ENCODE measurements at regions of chr2 and their contacts with region 1.

Region 1: DNA sequence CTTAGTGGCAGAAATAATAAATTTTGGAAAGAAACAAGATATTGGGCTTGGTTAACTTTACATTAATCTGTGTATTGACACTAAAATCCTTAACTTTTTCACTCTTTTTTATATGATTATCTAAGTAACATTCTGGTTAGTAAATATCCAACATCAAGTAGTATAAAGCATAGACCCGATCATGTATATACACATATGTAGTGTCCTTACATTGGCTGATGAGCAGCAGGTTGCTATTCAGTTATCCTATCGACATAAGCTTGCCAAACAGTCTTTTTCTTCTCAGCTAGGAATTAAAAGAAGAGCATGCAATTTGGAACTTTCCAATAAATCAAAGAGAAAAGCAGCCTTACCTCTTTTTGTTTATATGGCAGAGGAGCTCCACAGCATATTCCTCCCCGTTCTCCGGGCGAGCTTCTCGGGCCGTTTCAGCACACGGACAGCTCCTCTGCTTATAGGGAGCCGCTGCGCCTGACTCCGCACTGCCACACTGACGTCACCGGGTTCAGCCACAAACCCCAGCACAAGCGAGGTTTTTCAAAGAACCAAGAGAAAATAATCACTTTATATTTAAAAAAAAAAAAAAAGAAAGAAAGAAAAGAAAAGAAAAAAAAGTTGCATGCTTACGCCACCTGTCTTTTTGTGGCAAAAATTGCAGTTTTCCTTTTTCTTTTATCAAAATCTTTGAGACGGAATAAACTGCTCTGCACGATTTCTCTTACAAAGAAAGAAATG is at the start of gene SCG2:
- DNase-seq: peak; percentile 96
- ATAC-seq: peak; percentile 96
- H3K4me3 ChIP-seq: no peak within 1 kb of the TSS
- H3K27ac ChIP-seq: no peak within 1 kb of the TSS
- H3K4me1 ChIP-seq: peaks cover 8% of the 10 kb centered on the region
- H3K27me3 ChIP-seq: no peaks in the 10 kb centered on the region
- CTCF ChIP-seq: peak; percentile 42
- POLR2A ChIP-seq: no peak
- RAD21 ChIP-seq: peak; percentile 41; the same call in 1 of the 2 replicates
- total RNA-seq, gene SCG2: 0.36 and 0.56 TPM in 2 replicates

Region 2: DNA sequence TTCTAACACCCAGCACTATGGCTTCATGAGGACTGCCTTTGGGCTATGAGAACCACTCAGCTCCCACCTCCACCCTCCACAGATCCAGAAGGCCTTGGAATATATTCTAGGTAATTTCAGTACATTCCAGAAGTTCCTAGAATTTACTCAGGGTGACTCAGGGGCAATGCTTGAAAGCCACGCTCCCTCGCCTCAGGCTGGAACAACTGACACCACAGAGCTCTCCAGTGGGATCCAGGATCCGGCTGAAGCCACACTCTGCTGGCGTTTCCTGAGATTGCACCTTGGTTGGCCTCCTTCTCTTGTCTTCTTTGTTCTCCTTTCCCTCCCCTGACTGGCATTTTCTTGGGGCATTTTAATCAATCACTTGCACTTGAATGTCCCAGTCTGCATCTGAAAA is 642.8 kb before region 1 on chr2:
- CTCF ChIA-PET with region 1: no interaction called
- POLR2A ChIA-PET with region 1: no interaction called
- dilution Hi-C with region 1: no loop called
- in situ Hi-C with region 1: no loop called
- intact Hi-C with region 1: no loop called
- DNase-seq: peak; percentile 87
- ATAC-seq: peak; percentile 98
- H3K4me3 ChIP-seq: no peak overlapping the region
- H3K27ac ChIP-seq: peak overlapping the region; percentile 71
- H3K4me1 ChIP-seq: peaks cover 7% of the 10 kb centered on the region
- H3K27me3 ChIP-seq: no peaks in the 10 kb centered on the region
- CTCF ChIP-seq: peak; percentile 55
- POLR2A ChIP-seq: no peak
- RAD21 ChIP-seq: peak; percentile 67

Region 3: DNA sequence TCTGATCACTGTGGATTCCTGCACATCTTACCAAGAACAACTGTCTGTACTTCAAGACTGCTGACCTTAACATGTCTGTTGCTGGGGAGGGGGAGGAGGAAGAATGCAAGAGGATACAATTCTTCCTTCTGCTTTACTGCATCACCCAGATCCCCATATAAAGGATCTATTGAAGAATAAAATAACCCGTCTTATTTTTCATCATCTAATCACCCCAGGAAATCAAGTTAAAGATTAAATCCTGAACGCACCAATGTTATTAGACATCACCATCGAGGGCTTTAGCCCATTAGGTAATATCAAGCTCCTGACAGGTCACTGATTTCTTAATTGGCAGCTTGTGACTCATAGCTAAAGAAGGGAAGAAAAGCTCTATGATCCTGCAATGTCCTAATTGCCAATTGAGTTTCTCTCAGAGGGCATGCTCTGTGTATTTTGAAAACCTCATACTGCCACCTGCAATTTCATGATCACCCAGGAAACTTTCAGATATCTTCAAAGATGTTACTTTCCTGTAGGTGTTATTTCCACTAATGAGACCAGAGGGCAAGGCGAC is 625.5 kb before region 1 on chr2:
- CTCF ChIA-PET with region 1: interaction called, 3 read pairs
- POLR2A ChIA-PET with region 1: no interaction called
- dilution Hi-C with region 1: no loop called
- in situ Hi-C with region 1: loop called (anchors 10 kb)
- intact Hi-C with region 1: loop called (anchors 5 kb)
- DNase-seq: no peak
- ATAC-seq: no peak
- H3K4me3 ChIP-seq: no peak overlapping the region
- H3K27ac ChIP-seq: no peak overlapping the region
- H3K4me1 ChIP-seq: peaks cover 3% of the 10 kb centered on the region; the same call in 1 of the 2 replicates
- H3K27me3 ChIP-seq: no peaks in the 10 kb centered on the region
- CTCF ChIP-seq: no peak
- POLR2A ChIP-seq: no peak
- RAD21 ChIP-seq: no peak

Region 4: GRCh38 chr2:223247136-223247535 is 355.0 kb before region 1 on chr2:
- CTCF ChIA-PET with region 1: interaction called, 5 read pairs
- POLR2A ChIA-PET with region 1: no interaction called
- dilution Hi-C with region 1: no loop called
- in situ Hi-C with region 1: no loop called
- intact Hi-C with region 1: loop called (anchors 10 kb)
- DNase-seq: peak; percentile 43
- ATAC-seq: peak; percentile 77
- H3K4me3 ChIP-seq: no peak overlapping the region
- H3K27ac ChIP-seq: no peak overlapping the region
- H3K4me1 ChIP-seq: no peaks in the 10 kb centered on the region
- H3K27me3 ChIP-seq: no peaks in the 10 kb centered on the region
- CTCF ChIP-seq: peak; percentile 63
- POLR2A ChIP-seq: no peak
- RAD21 ChIP-seq: peak; percentile 68

Region 5: DNA sequence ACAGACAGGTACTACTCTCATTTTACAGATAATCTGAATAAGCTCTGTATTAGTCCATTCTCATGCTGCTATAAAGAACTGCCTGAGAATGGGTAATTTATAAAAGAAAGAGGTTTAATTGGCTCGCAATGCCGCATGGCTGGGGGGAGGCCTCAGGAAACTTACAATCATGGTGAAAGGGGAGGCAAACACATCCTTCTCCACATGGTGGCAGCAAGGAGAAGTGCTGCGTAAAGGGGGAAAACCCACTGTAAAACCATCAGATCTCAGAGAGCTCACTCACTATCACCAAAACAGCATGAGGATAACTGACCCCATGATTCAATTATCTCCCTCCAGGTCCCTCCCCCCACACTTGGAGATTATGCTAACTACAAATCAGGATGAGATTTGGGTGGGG is 295.7 kb before region 1 on chr2:
- CTCF ChIA-PET with region 1: interaction called, 4 read pairs
- POLR2A ChIA-PET with region 1: no interaction called
- dilution Hi-C with region 1: no loop called
- in situ Hi-C with region 1: no loop called
- intact Hi-C with region 1: loop called (anchors 5 kb)
- DNase-seq: peak; percentile 49
- ATAC-seq: peak; percentile 64; the same call in 1 of the 2 replicates
- H3K4me3 ChIP-seq: no peak overlapping the region
- H3K27ac ChIP-seq: no peak overlapping the region
- H3K4me1 ChIP-seq: no peaks in the 10 kb centered on the region
- H3K27me3 ChIP-seq: no peaks in the 10 kb centered on the region; the same call in 1 of the 2 replicates
- CTCF ChIP-seq: peak; percentile 47
- POLR2A ChIP-seq: no peak
- RAD21 ChIP-seq: peak; percentile 56

Region 6: GRCh38 chr2:223459328-223459939 is 142.7 kb before region 1 on chr2:
- CTCF ChIA-PET with region 1: interaction called, 3 read pairs
- POLR2A ChIA-PET with region 1: no interaction called
- dilution Hi-C with region 1: no loop called
- in situ Hi-C with region 1: no loop called
- intact Hi-C with region 1: loop called (anchors 2 kb)
- DNase-seq: peak; percentile 44
- ATAC-seq: no peak
- H3K4me3 ChIP-seq: no peak overlapping the region
- H3K27ac ChIP-seq: no peak overlapping the region
- H3K4me1 ChIP-seq: peaks cover 3% of the 10 kb centered on the region
- H3K27me3 ChIP-seq: no peaks in the 10 kb centered on the region
- CTCF ChIP-seq: peak; percentile 53
- POLR2A ChIP-seq: no peak
- RAD21 ChIP-seq: peak; percentile 43

Region 7: GRCh38 chr2:223465793-223466192 is 136.3 kb before region 1 on chr2:
- CTCF ChIA-PET with region 1: no interaction called
- POLR2A ChIA-PET with region 1: no interaction called
- dilution Hi-C with region 1: no loop called
- in situ Hi-C with region 1: loop called (anchors 10 kb)
- intact Hi-C with region 1: no loop called
- DNase-seq: peak; percentile 96
- ATAC-seq: peak; percentile 81
- H3K4me3 ChIP-seq: no peak overlapping the region
- H3K27ac ChIP-seq: no peak overlapping the region
- H3K4me1 ChIP-seq: peaks cover 13% of the 10 kb centered on the region
- H3K27me3 ChIP-seq: no peaks in the 10 kb centered on the region
- CTCF ChIP-seq: no peak
- POLR2A ChIP-seq: no peak
- RAD21 ChIP-seq: peak; percentile 8; the same call in 1 of the 2 replicates

Measured in IMR-90 (cell line).